AG04449 (cell line): ENCODE measurements at regions of chr1 and their contacts with region 1.

Region 1: DNA sequence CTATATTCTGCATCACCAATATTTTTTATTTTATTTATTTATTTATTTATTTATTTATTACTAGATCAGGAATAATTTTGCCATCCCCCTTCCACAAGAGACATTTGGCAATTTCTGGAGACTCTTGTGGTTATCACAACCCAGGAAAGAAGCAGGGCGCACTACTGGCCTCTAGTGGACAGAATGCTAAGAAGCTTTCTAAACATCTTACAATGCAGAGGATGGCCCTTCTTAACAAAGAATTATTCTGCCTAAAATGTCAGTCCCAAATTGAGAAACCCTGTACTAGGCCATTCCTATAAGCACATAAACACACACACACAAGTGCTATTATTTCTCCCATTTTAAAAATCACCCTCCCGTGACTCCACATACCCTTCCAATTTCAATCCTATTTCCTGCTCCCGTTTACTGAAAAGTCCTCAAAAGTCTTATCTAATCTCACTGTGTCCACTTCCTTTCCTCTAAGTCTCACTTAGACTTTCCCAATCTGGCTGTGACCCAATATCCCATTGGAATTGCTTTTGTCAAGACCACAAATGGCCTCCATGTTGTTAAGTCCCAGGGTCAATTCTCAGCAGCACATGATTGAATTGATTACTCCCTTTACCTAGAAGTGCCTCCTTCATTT is 43.7 kb upstream of the RNF11 start:
- DNase-seq: peak; percentile 28
- H3K4me3 ChIP-seq: no peak overlapping the region
- CTCF ChIP-seq: peak; percentile 75

Region 2: DNA sequence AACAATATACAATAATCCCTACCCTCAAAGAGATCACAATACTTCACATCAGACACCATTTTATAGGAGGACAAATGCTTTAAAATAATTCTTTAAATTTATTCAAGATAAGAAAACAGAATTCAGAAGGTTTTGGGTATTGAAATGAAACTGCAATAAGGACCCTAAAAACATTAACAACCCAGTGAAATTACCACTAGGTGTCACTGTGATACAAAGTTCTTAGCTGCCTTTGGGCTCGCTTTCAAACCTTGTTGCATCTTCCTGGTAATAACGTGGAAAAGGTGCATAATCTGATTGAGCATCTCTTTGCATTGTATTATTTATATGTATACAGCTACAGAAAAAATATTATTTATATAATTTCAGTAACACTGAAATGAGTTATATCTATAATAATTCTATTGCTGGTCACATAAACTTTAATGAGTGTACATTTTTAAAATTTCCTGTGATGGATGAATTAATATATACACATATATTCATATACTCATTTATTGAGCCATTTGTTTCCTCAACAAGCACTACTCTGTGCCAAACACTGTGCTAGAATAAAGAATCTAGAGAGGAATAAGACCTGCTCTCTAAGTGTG is 417.5 kb before region 1 on chr1:
- CTCF ChIA-PET with region 1: interaction called, 173 read pairs
- POLR2A ChIA-PET with region 1: no interaction called
- DNase-seq: peak; percentile 19
- H3K4me3 ChIP-seq: no peak overlapping the region
- CTCF ChIP-seq: peak; percentile 51

Region 3: GRCh38 chr1:50936321-50936720 is 256.0 kb before region 1 on chr1:
- CTCF ChIA-PET with region 1: interaction called, 129 read pairs
- POLR2A ChIA-PET with region 1: no interaction called
- DNase-seq: no peak
- H3K4me3 ChIP-seq: no peak overlapping the region
- CTCF ChIP-seq: no peak

Region 4: DNA sequence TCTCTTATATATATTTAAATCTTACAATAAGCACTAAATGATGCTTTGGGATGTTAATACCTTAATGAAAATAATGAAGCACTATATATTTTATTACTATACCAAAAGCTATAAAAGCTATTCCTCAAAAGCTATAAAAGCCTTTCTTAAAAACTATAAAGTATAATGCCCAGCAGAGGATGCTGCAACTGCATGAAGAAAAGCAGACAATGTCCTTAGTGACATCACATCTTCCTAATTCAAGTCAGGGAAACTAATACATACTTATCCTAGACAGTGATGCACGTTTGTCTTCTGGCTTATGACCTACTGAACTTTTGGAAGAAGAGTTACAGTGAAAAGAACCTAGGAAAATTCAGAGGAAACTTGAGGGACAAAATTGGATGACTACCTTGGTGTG is 103.8 kb before region 1 on chr1:
- CTCF ChIA-PET with region 1: interaction called, 20 read pairs
- POLR2A ChIA-PET with region 1: no interaction called
- DNase-seq: no peak
- H3K4me3 ChIP-seq: no peak overlapping the region
- CTCF ChIP-seq: no peak

Region 5: GRCh38 chr1:51203121-51203873 is 11.0 kb after region 1 on chr1:
- CTCF ChIA-PET with region 1: interaction called, 75 read pairs
- POLR2A ChIA-PET with region 1: no interaction called
- DNase-seq: no peak
- H3K4me3 ChIP-seq: no peak overlapping the region
- CTCF ChIP-seq: no peak

Region 6: GRCh38 chr1:51296383-51297357 is 104.3 kb after region 1 on chr1:
- CTCF ChIA-PET with region 1: interaction called, 83 read pairs
- POLR2A ChIA-PET with region 1: no interaction called
- DNase-seq: no peak
- H3K4me3 ChIP-seq: peak overlapping the region; percentile 48
- CTCF ChIP-seq: peak; percentile 98

Region 7: GRCh38 chr1:51359879-51360278 is 167.6 kb after region 1 on chr1:
- CTCF ChIA-PET with region 1: no interaction called
- POLR2A ChIA-PET with region 1: no interaction called
- DNase-seq: no peak
- H3K4me3 ChIP-seq: no peak overlapping the region
- CTCF ChIP-seq: no peak